Left cardiac atrium (tissue), 4 donors: ENCODE measurements at regions of chr3 and their contacts with region 1.

Region 1: GRCh38 chr3:128680602-128681368 is 30.2 kb upstream of the RPN1 start:
- DNase-seq: peak; percentile 100
- ATAC-seq: peak; percentile 99 to 100

Region 2: DNA sequence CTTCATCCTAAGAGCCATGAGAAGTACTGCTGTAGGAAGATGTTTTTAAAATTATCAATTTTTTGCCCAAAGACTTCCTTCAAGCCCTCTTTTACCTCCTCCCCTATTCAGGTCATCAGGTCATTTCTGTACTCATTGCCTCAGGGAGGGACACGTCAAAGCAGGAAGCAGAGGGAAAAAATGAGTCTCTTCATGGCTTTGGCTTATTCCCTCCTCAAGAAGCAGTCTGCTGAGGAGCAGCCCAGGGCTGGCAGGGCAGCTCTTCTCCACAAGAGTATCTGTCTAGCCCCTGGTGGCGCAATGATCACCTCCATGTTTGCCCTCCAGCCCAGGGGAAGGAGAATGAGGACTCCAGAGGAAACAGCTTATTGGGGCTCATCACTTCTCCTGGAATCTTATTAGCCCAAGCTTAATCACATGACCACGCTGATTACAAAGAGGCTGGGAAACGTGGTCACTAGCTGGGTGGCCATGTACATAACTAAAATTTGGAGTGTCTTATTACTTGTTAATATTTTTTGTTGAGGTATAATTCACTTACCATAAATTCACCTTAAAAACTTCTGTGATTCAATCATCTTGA is 143.6 kb before region 1 on chr3:
- intact Hi-C with region 1: no loop called
- DNase-seq: no peak
- ATAC-seq: no peak

Region 3: DNA sequence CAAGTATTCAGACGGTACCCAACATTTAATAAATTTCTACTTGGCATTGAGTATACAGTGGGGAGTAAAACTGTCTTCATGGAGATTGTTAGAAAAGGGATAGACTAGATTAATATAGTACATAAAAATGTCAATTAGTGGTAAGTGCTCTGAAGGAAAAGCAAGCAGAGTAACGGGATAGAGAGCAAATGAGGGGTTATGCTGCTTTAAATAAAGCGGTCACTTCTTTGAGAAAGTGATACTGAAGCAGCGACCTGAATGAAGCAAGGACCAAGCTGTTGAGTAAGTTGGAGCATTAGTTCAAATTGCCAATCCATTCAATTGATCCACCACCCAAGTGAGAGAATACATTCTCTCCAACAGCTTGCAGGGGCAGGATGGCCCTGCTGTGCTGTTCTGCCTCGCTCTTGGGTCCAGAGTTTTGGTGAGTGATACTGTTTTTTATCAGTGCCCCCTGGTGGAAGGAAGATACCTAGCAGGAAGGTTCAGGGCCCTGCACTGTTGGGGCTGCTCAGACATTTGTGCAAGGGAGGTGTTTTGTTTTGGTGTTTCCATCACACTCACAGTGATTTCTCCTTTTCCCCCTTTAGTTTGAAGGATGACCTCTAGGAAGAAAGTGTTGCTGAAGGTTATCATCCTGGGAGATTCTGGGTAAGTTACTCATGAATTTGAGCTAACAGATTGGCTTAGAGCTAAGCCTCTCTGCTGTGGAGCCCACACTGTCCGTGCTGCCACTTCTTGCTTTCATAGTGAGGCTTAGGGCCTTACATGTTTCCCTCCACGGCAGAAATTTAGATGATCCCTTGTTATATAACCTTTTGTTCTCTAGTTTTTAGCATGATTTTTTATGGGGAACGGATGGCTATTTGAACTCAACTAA is 114.2 kb after region 1 on chr3:
- intact Hi-C with region 1: loop called in 1 of 2 experiments (anchors 5 kb)
- DNase-seq: peak; percentile 50
- ATAC-seq: peak; percentile 93 to 97

Region 4: GRCh38 chr3:128845778-128846485 is 165.1 kb after region 1 on chr3:
- intact Hi-C with region 1: loop called in 1 of 2 experiments (anchors 1 kb)
- DNase-seq: peak; percentile 91
- ATAC-seq: peak; percentile 93 to 95